ENCODE measurements at regions of chr17 and their contacts with region 1.

Region 1: DNA sequence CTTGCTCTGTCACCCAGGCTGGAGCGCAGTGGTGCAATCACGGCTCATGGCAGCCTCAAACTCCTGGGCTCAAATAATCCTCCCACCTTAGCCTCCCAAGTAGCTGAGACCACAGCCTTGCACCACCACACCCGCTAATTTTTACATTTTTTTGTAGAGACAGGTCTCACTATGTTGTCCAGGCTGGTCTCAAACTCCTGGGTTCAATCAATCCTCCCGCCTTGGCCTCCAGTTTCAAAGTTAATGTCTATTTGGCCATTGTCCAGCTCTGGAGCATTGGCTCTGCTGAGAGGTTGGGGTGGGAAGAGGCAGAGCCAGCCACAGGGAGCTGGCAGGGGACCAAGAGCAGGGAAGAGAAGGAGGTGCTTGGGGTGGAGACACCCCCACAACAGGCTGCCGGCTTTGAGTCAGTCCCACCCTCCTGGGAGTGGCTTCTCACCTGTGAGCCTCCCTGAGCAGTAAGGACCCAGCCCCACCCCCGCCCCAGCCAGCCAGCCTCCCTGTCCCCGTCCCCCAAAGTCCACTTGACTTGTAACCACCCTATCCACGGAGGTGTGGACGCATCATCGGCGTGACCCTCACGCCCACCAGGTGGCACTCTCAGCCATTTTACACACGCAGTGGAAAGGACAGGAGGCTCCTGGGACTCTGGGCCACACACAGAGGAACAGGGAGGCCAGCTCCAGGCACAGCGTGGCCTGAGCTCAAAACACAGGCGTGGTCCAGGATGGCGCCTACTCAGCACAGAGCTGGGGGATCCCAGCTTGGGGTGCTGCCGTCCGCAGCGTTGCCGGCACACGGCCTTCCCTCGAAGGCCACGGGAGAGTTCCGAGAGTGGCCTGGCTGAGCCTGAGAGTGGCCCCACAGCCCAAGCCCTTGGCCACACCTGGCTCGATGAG is 22.8 kb upstream of the PVALEF start:
- DNase-seq: peak; percentile 85 to 90
- ATAC-seq: peak; percentile 91 to 98
- H3K4me3 ChIP-seq: no peak overlapping the region
- H3K27ac ChIP-seq: peak overlapping the region; percentile 49 to 61; a peak in 5 of 6 replicates
- H3K4me1 ChIP-seq: peaks cover 10% of the 10 kb centered on the region
- CTCF ChIP-seq: peak; percentile 87
- EP300 ChIP-seq: no peak
- POLR2A ChIP-seq: no peak
- RAD21 ChIP-seq: peak; percentile 87 to 88

Region 2: GRCh38 chr17:81034779-81035388 is 107.7 kb before region 1 on chr17 and contains the start of gene BAIAP2:
- CTCF ChIA-PET with region 1: no interaction called
- POLR2A ChIA-PET with region 1: no interaction called
- DNase-seq: peak; percentile 95 to 100
- ATAC-seq: peak; percentile 73 to 88
- H3K4me3 ChIP-seq: peak within 1 kb of the TSS; percentile 72
- H3K27ac ChIP-seq: peak within 1 kb of the TSS; percentile 72 to 90
- H3K4me1 ChIP-seq: peaks cover 19% of the 10 kb centered on the region
- CTCF ChIP-seq: peak; percentile 36
- EP300 ChIP-seq: no peak
- POLR2A ChIP-seq: peak; percentile 100
- RAD21 ChIP-seq: no peak; a peak in 1 of 5 replicates
- polyA plus RNA-seq, gene BAIAP2: 7.1 and 8.6 TPM in 2 replicates

Region 3: DNA sequence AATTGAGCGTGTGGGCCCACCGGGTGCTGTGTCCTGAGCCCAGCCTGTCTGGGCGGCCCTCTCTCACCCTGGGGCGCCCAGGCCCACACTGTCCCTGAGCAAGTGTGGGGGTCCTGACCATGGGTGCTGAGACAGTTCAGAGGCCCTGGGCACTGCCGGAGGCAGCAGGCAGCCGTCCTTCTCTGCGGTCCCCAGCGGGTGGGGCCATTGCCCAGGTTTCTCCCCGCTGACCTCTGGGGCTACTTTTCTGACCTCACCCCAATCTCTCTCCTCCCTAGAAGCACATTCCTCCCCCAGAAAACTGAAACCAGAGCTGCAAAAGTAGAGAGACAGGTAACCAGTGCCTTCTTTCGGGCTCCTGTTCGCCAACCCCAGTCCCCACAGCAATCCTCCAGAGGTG is 13.3 kb before region 1 on chr17:
- CTCF ChIA-PET with region 1: interaction called, 51 read pairs
- POLR2A ChIA-PET with region 1: no interaction called
- DNase-seq: no peak
- ATAC-seq: peak in 1 of 2 experiments; percentile 43; a peak in 3 of 6 replicates
- H3K4me3 ChIP-seq: no peak overlapping the region
- H3K27ac ChIP-seq: no peak overlapping the region
- H3K4me1 ChIP-seq: peaks cover 10% of the 10 kb centered on the region
- CTCF ChIP-seq: 0 out of 3 replicates have a peak, but pooled peaks have one; percentile 19
- EP300 ChIP-seq: no peak
- POLR2A ChIP-seq: no peak
- RAD21 ChIP-seq: peak in 1 of 2 experiments; percentile 18; a peak in 1 of 5 replicates

Region 4: GRCh38 chr17:81165246-81166032 is 22.9 kb after region 1 on chr17 and contains the start of gene PVALEF:
- CTCF ChIA-PET with region 1: interaction called, 22 read pairs
- POLR2A ChIA-PET with region 1: no interaction called
- DNase-seq: peak; percentile 31 to 70
- ATAC-seq: peak; percentile 33 to 60; a peak in 5 of 6 replicates
- H3K4me3 ChIP-seq: peak within 1 kb of the TSS; percentile 50
- H3K27ac ChIP-seq: peak within 1 kb of the TSS; percentile 54 to 86; a peak in 5 of 6 replicates
- H3K4me1 ChIP-seq: peaks cover 6% of the 10 kb centered on the region; the same call in 2 of the 3 replicates
- CTCF ChIP-seq: no peak
- EP300 ChIP-seq: no peak
- POLR2A ChIP-seq: no peak
- RAD21 ChIP-seq: no peak
- polyA plus RNA-seq, gene PVALEF: not detected in 2 replicates

Region 5: GRCh38 chr17:81179220-81179619 is 36.7 kb after region 1 on chr17:
- CTCF ChIA-PET with region 1: interaction called, 31 read pairs
- POLR2A ChIA-PET with region 1: no interaction called
- DNase-seq: no peak
- ATAC-seq: peak in 1 of 2 experiments; percentile 31; a peak in 2 of 6 replicates
- H3K4me3 ChIP-seq: no peak overlapping the region
- H3K27ac ChIP-seq: no peak overlapping the region
- H3K4me1 ChIP-seq: no peaks in the 10 kb centered on the region
- CTCF ChIP-seq: no peak
- EP300 ChIP-seq: no peak
- POLR2A ChIP-seq: no peak
- RAD21 ChIP-seq: no peak

Region 6: GRCh38 chr17:81189670-81190530 is 47.4 kb after region 1 on chr17:
- CTCF ChIA-PET with region 1: interaction called, 175 read pairs
- POLR2A ChIA-PET with region 1: no interaction called
- DNase-seq: peak; percentile 46 to 52
- ATAC-seq: peak; percentile 45 to 80; a peak in 5 of 6 replicates
- H3K4me3 ChIP-seq: no peak overlapping the region
- H3K27ac ChIP-seq: no peak overlapping the region
- H3K4me1 ChIP-seq: no peaks in the 10 kb centered on the region
- CTCF ChIP-seq: peak; percentile 25; the same call in 2 of the 3 replicates
- EP300 ChIP-seq: no peak
- POLR2A ChIP-seq: no peak
- RAD21 ChIP-seq: peak in 1 of 2 experiments; percentile 60; a peak in 4 of 5 replicates

Region 7: GRCh38 chr17:81222906-81223761 is 80.6 kb after region 1 on chr17 and contains the start of gene CEP131:
- CTCF ChIA-PET with region 1: interaction called, 153 read pairs
- POLR2A ChIA-PET with region 1: no interaction called
- DNase-seq: peak; percentile 100
- ATAC-seq: peak; percentile 95 to 99
- H3K4me3 ChIP-seq: peak within 1 kb of the TSS; percentile 79
- H3K27ac ChIP-seq: peak within 1 kb of the TSS; percentile 70 to 88
- H3K4me1 ChIP-seq: peaks cover 9% of the 10 kb centered on the region
- CTCF ChIP-seq: no peak
- EP300 ChIP-seq: no peak
- POLR2A ChIP-seq: peak; percentile 87
- RAD21 ChIP-seq: no peak
- polyA plus RNA-seq, gene CEP131: 2.6 and 3.3 TPM in 2 replicates

Measured in A549 (cell line).